HEK293 (cell line): ENCODE measurements at regions of chr22 and their contacts with region 1.

Region 1: DNA sequence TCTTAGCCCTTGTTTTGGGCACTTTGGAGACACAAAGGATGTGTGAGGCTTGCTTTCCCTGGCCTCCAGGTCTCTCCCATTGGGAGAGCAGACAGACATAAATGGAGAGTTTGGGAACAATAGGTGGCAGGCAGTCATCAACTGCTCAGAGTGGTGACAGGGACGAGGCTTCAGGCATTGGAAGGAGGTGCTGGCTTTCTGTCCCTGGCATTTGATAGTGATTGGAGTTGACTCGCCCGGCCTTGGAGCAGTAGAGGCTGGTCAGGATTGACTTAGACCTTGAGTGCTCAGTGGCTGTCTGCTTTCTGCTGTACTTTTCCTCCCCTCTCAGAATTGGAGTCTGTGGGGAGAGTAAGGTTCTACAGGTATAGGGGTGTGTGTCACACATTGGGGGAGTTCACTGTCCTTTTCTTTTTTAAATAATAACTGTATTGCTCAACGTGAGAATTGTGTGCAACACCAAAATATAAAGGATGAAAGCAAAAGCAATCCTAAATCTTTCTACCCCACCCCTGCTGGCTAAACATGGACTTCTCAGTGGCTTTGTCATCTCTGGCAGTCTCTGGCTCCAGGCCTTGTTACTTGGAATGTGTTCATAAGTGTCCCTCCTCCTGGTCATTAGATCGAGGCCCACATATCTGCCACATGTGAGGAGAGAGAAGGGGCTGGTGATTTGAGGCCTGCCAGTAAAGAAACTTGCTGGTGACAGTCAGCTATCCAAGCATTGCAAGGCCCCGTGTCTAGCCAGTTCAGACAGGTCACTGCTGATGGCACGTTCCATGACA is 21.1 kb downstream of the SHISA8 start:
- H3K4me3 ChIP-seq: no peak overlapping the region
- H3K27ac ChIP-seq: no peak overlapping the region
- H3K4me1 ChIP-seq: no peaks in the 10 kb centered on the region
- CTCF ChIP-seq: no peak

Region 2: GRCh38 chr22:41301105-41302020 is 592.4 kb before region 1 on chr22 and contains the start of gene ZC3H7B:
- CTCF ChIA-PET with region 1: no interaction called
- POLR2A ChIA-PET with region 1: no interaction called
- H3K4me3 ChIP-seq: peak within 1 kb of the TSS; percentile 82
- H3K27ac ChIP-seq: peak within 1 kb of the TSS; percentile 93
- H3K4me1 ChIP-seq: peaks cover 4% of the 10 kb centered on the region; the same call in 1 of the 2 replicates
- CTCF ChIP-seq: peak; percentile 82

Region 3: DNA sequence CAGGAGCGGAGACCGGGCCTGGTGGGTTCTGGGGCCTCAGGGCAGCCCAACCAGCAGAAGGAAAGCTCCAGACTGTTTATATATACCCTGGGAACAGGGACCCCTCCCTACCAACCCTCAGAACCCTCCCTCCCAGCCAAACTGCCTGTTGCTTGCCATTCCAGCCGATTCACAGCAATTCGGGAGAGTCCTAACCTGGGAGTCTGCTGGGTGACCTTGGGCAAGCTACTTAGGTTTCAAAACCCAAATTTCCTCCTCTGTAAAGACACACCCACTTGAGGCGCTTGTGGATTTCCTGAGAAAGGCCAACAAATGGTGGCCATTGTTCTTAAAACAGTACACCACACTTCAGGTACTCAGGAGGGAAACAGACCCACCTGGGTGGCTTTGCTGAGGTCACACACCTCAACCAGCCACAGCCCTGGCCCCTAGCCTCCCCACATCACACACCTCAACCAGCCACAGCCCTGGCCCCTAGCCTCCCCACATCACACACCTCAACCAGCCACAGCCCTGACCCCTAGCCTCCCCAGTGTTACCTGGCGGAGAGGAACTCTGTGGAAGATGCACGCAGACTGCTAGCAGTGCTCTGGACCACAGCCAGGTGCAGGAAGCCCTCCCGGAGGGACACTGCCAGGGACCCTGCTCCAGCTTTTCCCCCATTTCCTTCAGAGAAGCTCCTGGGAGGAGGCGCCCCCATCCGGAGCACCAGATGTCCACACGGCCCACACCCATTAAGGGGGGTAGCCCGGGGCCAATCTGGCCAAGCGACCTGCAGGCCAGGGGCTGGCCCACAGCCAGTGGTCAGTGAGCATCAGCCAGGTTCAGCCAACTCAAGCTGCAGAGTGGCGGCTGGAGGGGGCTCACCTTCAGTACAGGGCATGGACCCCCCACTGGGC is 14.9 kb after region 1 on chr22:
- CTCF ChIA-PET with region 1: no interaction called
- POLR2A ChIA-PET with region 1: interaction called, 10 read pairs
- H3K4me3 ChIP-seq: no peak overlapping the region
- H3K27ac ChIP-seq: peak overlapping the region; percentile 37; the same call in 1 of the 2 replicates
- H3K4me1 ChIP-seq: no peaks in the 10 kb centered on the region
- CTCF ChIP-seq: no peak

Region 4: DNA sequence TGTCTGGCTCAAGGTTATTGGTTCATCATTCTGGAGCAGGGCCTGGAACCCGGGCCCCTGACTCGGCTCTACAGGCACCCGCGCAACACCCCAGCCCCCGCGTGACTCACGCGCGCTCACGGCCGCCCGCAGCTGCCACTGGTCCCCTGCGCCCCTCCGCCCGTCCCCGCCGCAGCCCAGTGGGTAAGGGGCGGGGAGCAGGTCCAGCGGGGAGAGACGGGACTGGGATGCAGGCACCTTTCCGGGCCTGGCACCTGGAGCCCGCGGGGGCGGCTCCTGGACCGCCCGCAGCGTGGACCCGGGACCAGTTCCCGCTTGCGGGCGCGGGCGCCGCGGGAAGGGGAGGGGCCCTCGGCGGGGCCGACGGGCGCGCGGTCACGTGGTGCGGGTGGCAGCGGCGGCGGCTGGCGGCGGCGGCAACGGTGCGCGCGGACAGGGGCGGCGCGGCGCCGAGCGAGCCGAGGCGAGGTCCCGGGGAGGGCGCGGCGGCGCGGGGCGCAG is 82.7 kb after region 1 on chr22:
- CTCF ChIA-PET with region 1: no interaction called
- POLR2A ChIA-PET with region 1: no interaction called
- H3K4me3 ChIP-seq: peak overlapping the region; percentile 46
- H3K27ac ChIP-seq: no peak overlapping the region; the same call in 1 of the 2 replicates
- H3K4me1 ChIP-seq: peaks cover 3% of the 10 kb centered on the region; the same call in 1 of the 2 replicates
- CTCF ChIP-seq: no peak